ENCODE measurements at regions of chr9 and their contacts with region 1.

Region 1: DNA sequence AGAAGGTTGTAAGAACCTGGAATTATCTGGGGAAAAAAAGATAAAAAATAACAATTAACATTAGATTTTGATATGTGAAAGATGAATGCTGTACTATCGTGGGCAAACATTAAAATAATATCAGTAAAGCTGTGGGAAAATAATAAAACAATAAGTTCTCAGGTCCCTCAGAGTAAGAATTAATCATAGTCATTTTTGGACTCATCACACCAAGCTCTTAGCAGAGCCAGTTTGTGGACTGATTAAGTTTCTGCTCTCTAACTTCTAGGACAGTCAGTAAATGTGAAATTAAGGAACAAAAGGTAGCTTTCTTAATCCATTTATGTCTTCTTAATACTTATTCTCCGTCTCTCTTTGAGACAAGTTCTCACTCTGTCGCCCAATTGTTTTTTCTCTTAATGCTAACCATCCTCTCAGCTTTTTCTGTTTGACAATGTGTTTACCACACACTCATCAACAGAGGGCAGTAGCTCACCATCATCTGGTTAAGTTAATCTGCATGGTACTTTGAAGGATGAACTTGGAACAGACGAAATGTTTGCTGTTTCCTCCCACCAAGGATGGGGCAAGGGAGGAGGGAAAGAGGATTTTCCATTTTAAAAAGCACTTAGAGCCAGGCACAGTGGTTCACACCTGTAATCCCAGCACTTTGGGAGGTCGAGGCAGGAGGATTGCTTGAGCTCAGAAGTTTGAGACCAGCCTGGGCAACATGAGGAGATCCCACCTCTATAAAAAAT is 5.3 kb upstream of the ACO1 start:
- DNase-seq: peak; percentile 50 to 70
- H3K4me3 ChIP-seq: no peak overlapping the region
- H3K4me3 Mint-ChIP-seq: no peak overlapping the region
- H3K27ac Mint-ChIP-seq: no peak overlapping the region
- H3K4me1 ChIP-seq: 0 out of 2 replicates have a peak, but pooled peaks cover 4% of the 10 kb centered on the region
- H3K4me1 Mint-ChIP-seq: peaks cover 24% of the 10 kb centered on the region
- H3K27me3 ChIP-seq: no peaks in the 10 kb centered on the region
- H3K27me3 Mint-ChIP-seq: peaks cover 8% of the 10 kb centered on the region
- CTCF ChIP-seq: peak; percentile 54 to 70

Region 2: DNA sequence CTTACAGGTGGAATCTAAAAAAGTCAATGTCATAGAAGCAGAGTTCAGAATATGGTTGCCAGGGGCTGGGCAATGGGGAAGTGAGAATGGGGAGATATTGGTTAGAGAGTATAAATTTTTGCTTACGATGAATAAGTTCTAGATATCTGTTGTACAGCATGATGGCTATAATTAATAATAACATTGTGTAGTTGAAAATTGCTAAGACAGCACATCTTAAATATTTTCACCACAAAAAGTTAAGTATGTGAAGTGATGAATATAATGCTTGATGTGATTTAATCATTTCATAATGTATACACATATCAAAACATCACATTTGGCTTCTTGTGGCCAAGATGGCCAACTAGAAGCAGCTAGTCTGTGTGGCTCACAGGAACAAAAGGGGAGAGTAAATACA is 420.6 kb before region 1 on chr9:
- CTCF ChIA-PET with region 1: no interaction called
- POLR2A ChIA-PET with region 1: no interaction called
- intact Hi-C with region 1: no loop called
- DNase-seq: no peak
- H3K4me3 ChIP-seq: no peak overlapping the region
- H3K4me3 Mint-ChIP-seq: no peak overlapping the region
- H3K27ac Mint-ChIP-seq: no peak overlapping the region
- H3K4me1 ChIP-seq: no peaks in the 10 kb centered on the region
- H3K4me1 Mint-ChIP-seq: no peaks in the 10 kb centered on the region
- H3K27me3 ChIP-seq: no peaks in the 10 kb centered on the region
- H3K27me3 Mint-ChIP-seq: no peaks in the 10 kb centered on the region
- CTCF ChIP-seq: no peak

Region 3: DNA sequence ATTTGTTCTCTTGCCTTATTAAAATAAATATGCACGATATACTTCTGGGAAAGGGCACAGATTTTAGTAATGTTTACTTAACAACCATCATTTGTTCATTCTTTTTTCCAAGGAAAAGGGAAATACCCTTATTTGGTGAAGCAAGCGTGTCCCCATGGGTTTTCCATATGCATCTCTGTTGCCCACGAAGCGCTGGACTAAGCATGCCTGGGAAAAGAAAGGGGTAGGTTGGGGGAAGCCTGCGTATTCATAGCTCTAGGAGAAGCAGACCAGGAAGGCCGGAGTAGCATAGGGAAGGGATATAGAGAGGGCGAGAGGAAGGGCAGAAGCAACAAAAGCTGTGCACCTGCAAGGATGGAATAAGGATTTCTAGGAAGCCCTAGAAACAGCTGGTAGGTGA is 56.5 kb before region 1 on chr9:
- CTCF ChIA-PET with region 1: no interaction called
- POLR2A ChIA-PET with region 1: no interaction called
- intact Hi-C with region 1: no loop called
- DNase-seq: no peak
- H3K4me3 ChIP-seq: no peak overlapping the region
- H3K4me3 Mint-ChIP-seq: no peak overlapping the region
- H3K27ac Mint-ChIP-seq: no peak overlapping the region
- H3K4me1 ChIP-seq: no peaks in the 10 kb centered on the region
- H3K4me1 Mint-ChIP-seq: no peaks in the 10 kb centered on the region
- H3K27me3 ChIP-seq: no peaks in the 10 kb centered on the region
- H3K27me3 Mint-ChIP-seq: no peaks in the 10 kb centered on the region
- CTCF ChIP-seq: no peak

Region 4: GRCh38 chr9:32426278-32426939 is 47.2 kb after region 1 on chr9:
- CTCF ChIA-PET with region 1: interaction called, 48 read pairs
- POLR2A ChIA-PET with region 1: interaction called, 5 read pairs
- intact Hi-C with region 1: loop called (anchors 1 kb)
- DNase-seq: peak; percentile 56 to 76
- H3K4me3 ChIP-seq: no peak overlapping the region
- H3K4me3 Mint-ChIP-seq: no peak overlapping the region
- H3K27ac Mint-ChIP-seq: peak overlapping the region; percentile 59
- H3K4me1 ChIP-seq: peaks cover 24% of the 10 kb centered on the region
- H3K4me1 Mint-ChIP-seq: no peaks in the 10 kb centered on the region
- H3K27me3 ChIP-seq: no peaks in the 10 kb centered on the region
- H3K27me3 Mint-ChIP-seq: no peaks in the 10 kb centered on the region
- CTCF ChIP-seq: no peak

Region 5: DNA sequence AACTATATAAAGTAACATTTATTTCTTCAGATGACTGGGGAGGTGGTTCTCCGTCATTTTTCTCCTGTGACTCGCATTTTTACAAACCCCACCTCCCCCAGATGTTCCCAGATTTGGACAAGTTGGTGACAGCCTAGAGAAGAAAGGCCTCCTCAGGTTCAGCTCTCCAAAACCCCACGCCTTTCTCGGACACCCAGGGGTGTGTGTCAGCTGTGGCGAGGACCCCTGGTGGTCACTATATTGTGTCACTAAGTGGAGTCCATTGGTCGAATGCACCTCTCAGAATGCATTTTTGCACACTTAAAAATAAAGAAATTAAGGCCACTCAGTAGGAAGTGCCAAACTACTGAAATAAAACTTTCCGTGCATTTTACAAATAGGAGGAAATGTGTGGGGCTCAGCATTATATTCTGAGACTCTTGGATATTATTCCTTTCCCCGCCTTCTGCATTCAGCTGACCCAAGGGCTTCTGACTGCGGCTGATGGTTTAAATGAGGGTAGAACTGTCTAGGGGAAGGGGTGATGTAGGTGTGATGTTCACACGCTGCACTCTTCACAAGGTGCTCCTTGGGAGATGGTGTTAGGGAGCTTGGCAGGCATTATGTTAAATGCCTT is 52.9 kb after region 1 on chr9:
- CTCF ChIA-PET with region 1: interaction called, 48 read pairs
- POLR2A ChIA-PET with region 1: no interaction called
- intact Hi-C with region 1: loop called (anchors 1 kb)
- DNase-seq: peak; percentile 73
- H3K4me3 ChIP-seq: no peak overlapping the region
- H3K4me3 Mint-ChIP-seq: no peak overlapping the region
- H3K27ac Mint-ChIP-seq: no peak overlapping the region
- H3K4me1 ChIP-seq: peaks cover 5% of the 10 kb centered on the region
- H3K4me1 Mint-ChIP-seq: peaks cover 6% of the 10 kb centered on the region
- H3K27me3 ChIP-seq: no peaks in the 10 kb centered on the region
- H3K27me3 Mint-ChIP-seq: no peaks in the 10 kb centered on the region
- CTCF ChIP-seq: peak; percentile 68 to 77

Region 6: GRCh38 chr9:32550562-32551433 is 171.6 kb after region 1 on chr9:
- CTCF ChIA-PET with region 1: interaction called, 17 read pairs
- POLR2A ChIA-PET with region 1: interaction called, 7 read pairs
- intact Hi-C with region 1: loop called (anchors 1 kb)
- DNase-seq: peak; percentile 96 to 97
- H3K4me3 ChIP-seq: peak overlapping the region; percentile 87
- H3K4me3 Mint-ChIP-seq: peak overlapping the region; percentile 93
- H3K27ac Mint-ChIP-seq: peak overlapping the region; percentile 96
- H3K4me1 ChIP-seq: no peaks in the 10 kb centered on the region
- H3K4me1 Mint-ChIP-seq: peaks cover 7% of the 10 kb centered on the region
- H3K27me3 ChIP-seq: no peaks in the 10 kb centered on the region
- H3K27me3 Mint-ChIP-seq: no peaks in the 10 kb centered on the region
- CTCF ChIP-seq: no peak

Region 7: DNA sequence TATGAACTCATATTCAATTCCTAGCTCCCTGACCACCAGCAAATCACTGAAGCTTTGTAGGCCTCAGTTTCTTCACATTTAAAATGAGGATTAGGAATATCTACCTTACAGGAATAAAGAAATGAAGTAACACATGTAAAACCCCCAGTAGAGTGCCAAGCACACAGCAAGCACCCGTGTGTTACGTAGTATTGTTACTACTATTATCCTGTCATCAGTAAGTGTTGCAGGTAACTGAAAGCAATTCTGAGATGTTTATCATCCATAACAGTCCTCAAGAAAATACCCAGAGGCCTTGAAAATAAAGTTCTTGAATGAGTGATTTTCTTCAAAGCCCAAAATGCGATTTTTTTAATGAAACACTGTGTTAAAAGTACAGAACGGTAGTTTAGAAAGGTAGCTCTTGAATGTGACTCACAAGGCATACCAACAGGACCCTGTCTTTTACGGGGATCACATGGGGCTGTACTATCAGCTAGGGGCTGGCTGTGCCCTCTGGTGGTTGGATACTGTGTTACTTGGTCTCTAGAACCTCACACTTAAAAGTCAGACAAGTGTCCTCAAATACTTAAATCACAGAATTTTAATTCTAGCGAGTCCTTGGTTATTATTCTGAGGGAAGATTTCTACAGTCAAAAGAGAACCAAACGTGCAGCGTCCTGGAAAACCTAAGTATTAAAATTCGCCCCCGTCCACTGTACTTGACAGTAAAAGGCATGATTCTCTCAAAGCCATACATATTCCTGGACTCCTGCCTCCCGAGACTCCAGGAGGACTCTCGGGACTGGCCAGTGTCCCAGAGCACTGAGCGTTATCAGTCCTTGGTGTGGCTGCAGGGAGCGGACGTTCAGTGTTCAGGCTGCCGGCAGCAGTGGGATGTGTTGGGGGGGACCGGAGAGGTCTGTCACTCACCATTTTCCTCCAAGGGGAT is 193.1 kb after region 1 on chr9:
- CTCF ChIA-PET with region 1: interaction called, 63 read pairs
- POLR2A ChIA-PET with region 1: no interaction called
- intact Hi-C with region 1: loop called (anchors 1 kb)
- DNase-seq: peak; percentile 74 to 78
- H3K4me3 ChIP-seq: peak overlapping the region; percentile 86
- H3K4me3 Mint-ChIP-seq: peak overlapping the region; percentile 98
- H3K27ac Mint-ChIP-seq: peak overlapping the region; percentile 100
- H3K4me1 ChIP-seq: peaks cover 5% of the 10 kb centered on the region; the same call in 1 of the 2 replicates
- H3K4me1 Mint-ChIP-seq: no peaks in the 10 kb centered on the region
- H3K27me3 ChIP-seq: no peaks in the 10 kb centered on the region
- H3K27me3 Mint-ChIP-seq: peaks cover 2% of the 10 kb centered on the region
- CTCF ChIP-seq: peak; percentile 73 to 76

Region 8: GRCh38 chr9:32579706-32580331 is 200.7 kb after region 1 on chr9:
- CTCF ChIA-PET with region 1: interaction called, 113 read pairs
- POLR2A ChIA-PET with region 1: no interaction called
- intact Hi-C with region 1: loop called (anchors 1 kb)
- DNase-seq: peak; percentile 59 to 71
- H3K4me3 ChIP-seq: no peak overlapping the region
- H3K4me3 Mint-ChIP-seq: no peak overlapping the region
- H3K27ac Mint-ChIP-seq: no peak overlapping the region
- H3K4me1 ChIP-seq: peaks cover 15% of the 10 kb centered on the region
- H3K4me1 Mint-ChIP-seq: peaks cover 14% of the 10 kb centered on the region
- H3K27me3 ChIP-seq: no peaks in the 10 kb centered on the region
- H3K27me3 Mint-ChIP-seq: peaks cover 5% of the 10 kb centered on the region
- CTCF ChIP-seq: peak; percentile 90 to 92

Region 9: GRCh38 chr9:32968101-32969011 is 589.2 kb after region 1 on chr9:
- CTCF ChIA-PET with region 1: interaction called, 7 read pairs
- POLR2A ChIA-PET with region 1: no interaction called
- intact Hi-C with region 1: loop called (anchors 2 kb)
- DNase-seq: peak in 1 of 2 experiments; percentile 52
- H3K4me3 ChIP-seq: no peak overlapping the region
- H3K4me3 Mint-ChIP-seq: no peak overlapping the region
- H3K27ac Mint-ChIP-seq: no peak overlapping the region
- H3K4me1 ChIP-seq: no peaks in the 10 kb centered on the region
- H3K4me1 Mint-ChIP-seq: no peaks in the 10 kb centered on the region
- H3K27me3 ChIP-seq: no peaks in the 10 kb centered on the region
- H3K27me3 Mint-ChIP-seq: no peaks in the 10 kb centered on the region
- CTCF ChIP-seq: peak; percentile 57 to 69